A549 (cell line): ENCODE measurements at regions of chr1 and their contacts with region 1.

Region 1: GRCh38 chr1:28354121-28354520 is 15.4 kb upstream of the PHACTR4 start:
- DNase-seq: peak in 1 of 2 experiments; percentile 37
- ATAC-seq: peak; percentile 27 to 63; a peak in 3 of 6 replicates
- H3K4me3 ChIP-seq: no peak overlapping the region
- H3K27ac ChIP-seq: peak overlapping the region; percentile 70 to 89
- H3K4me1 ChIP-seq: peaks cover 27% of the 10 kb centered on the region
- CTCF ChIP-seq: no peak
- EP300 ChIP-seq: no peak
- POLR2A ChIP-seq: no peak
- RAD21 ChIP-seq: no peak

Region 2: GRCh38 chr1:28286111-28286510 is 68.0 kb before region 1 on chr1:
- CTCF ChIA-PET with region 1: no interaction called
- POLR2A ChIA-PET with region 1: no interaction called
- DNase-seq: no peak
- ATAC-seq: no peak
- H3K4me3 ChIP-seq: no peak overlapping the region
- H3K27ac ChIP-seq: no peak overlapping the region
- H3K4me1 ChIP-seq: no peaks in the 10 kb centered on the region
- CTCF ChIP-seq: no peak
- EP300 ChIP-seq: no peak
- POLR2A ChIP-seq: no peak
- RAD21 ChIP-seq: no peak

Region 3: DNA sequence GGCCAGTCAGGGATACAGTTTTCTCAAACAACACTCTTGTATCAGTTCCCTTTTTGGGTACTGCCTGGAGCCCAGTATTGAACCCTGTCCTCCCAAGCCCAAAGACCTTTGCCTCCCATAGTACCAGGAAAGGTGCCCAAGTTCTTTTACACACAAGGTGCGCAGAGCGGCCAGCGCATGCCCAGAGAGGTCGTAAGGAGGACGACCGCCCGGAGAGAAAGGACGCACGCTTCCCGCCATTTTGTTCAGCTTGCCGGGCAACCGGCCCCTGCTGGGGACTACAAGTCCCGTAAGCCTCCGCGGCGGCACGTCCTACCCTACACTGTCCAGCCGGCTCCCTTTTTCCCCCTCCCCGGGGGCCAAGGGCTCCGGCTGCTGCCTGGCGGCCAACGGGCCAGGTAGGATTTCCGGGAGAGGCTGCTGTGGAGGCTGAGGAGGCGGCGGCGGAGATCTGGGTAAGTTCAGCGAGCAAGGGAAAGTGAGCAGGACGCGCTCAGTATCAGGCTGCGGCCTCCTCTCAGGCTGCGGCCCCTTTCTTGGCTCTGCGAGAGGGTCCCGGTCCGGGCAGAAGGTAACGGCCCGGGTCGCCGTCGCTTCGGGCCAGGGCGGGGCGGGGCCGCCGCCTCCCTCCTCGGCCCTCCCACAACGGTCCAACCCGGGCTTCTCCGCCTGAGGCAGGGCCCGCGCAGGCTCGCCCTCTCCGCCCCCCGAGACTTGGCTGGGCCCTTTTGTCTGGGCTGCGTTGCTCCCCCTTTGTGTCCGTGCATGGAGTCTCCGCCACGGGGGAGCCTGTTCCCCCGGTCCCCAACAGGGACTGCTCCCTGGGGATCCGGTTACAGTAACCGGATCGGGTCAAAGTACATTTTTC is 15.5 kb after region 1 on chr1 and contains the start of gene PHACTR4:
- CTCF ChIA-PET with region 1: interaction called, 31 read pairs
- POLR2A ChIA-PET with region 1: interaction called, 9 read pairs
- DNase-seq: peak; percentile 87 to 95
- ATAC-seq: peak; percentile 94 to 98
- H3K4me3 ChIP-seq: peak within 1 kb of the TSS; percentile 72
- H3K27ac ChIP-seq: peak within 1 kb of the TSS; percentile 96
- H3K4me1 ChIP-seq: peaks cover 39% of the 10 kb centered on the region
- CTCF ChIP-seq: no peak
- EP300 ChIP-seq: no peak
- POLR2A ChIP-seq: peak; percentile 74
- RAD21 ChIP-seq: no peak
- polyA plus RNA-seq, gene PHACTR4: 17.4 and 32.1 TPM in 2 replicates